CD4-positive, alpha-beta T cell (primary cell): ENCODE measurements at regions of chr12 and their contacts with region 1.

Region 1: DNA sequence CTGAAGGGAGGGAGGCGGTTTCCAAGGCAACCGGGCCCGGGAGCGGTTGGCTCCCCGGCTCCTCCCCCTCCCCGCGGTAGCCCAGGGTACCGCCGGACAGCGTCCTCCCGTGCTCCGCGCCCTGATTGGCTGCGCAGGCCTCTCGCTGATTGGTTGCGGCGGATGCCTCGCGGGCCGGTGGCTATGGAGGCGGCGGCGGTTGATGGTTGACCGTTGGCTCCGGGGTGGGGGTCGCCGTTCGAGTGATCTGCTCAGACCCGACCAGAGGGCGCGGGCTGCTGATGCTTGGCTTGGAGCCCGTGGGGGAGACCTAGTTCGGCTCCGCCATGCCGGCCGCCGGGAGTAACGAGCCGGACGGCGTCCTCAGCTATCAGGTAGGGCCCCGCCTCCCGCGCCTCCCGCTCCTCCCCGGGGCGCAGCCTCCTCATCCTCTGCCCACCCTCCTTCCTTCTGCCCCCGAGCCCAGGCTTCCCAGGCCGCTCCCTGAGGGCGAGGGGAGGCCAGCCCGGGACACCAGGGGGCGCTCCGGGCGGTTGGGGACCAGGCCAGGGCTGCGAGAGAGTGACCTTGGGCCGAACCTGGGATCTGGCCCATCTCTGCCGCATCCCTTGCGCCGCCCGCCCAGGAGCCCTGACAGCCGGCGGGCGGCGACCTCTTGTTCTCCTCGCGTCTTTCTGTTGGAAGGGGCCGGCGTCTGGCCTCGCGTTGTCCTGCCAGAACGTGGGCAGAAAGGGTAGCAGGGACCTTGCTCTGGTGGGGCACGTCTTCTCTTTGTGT is at the start of gene SLC4A8:
- DNase-seq: peak; percentile 37 to 89 (median 59)
- ATAC-seq: peak; percentile 81
- H3K4me3 ChIP-seq: peak within 1 kb of the TSS; percentile 74
- H3K4me3 Mint-ChIP-seq: peak within 1 kb of the TSS; percentile 84
- H3K27ac ChIP-seq: no peak within 1 kb of the TSS
- H3K27ac Mint-ChIP-seq: no peak within 1 kb of the TSS
- H3K4me1 ChIP-seq: peaks cover 18% of the 10 kb centered on the region
- H3K4me1 Mint-ChIP-seq: peaks cover 28% of the 10 kb centered on the region
- H3K27me3 ChIP-seq: no peaks in the 10 kb centered on the region
- H3K27me3 Mint-ChIP-seq: no peaks in the 10 kb centered on the region
- CTCF ChIP-seq: peak; percentile 75
- total RNA-seq, gene SLC4A8: 1.3 to 1.8 TPM

Region 2: GRCh38 chr12:51531978-51532497 is 107.2 kb after region 1 on chr12:
- CTCF ChIA-PET with region 1: interaction called, 18 read pairs
- POLR2A ChIA-PET with region 1: interaction called, 3 read pairs
- intact Hi-C with region 1: loop called (anchors 1 kb)
- DNase-seq: peak; percentile 56 to 83 (median 64)
- ATAC-seq: peak; percentile 94
- H3K4me3 ChIP-seq: no peak overlapping the region
- H3K4me3 Mint-ChIP-seq: no peak overlapping the region
- H3K27ac ChIP-seq: no peak overlapping the region
- H3K27ac Mint-ChIP-seq: no peak overlapping the region
- H3K4me1 ChIP-seq: peaks cover 6% of the 10 kb centered on the region
- H3K4me1 Mint-ChIP-seq: no peaks in the 10 kb centered on the region
- H3K27me3 ChIP-seq: no peaks in the 10 kb centered on the region
- H3K27me3 Mint-ChIP-seq: peaks cover 7% of the 10 kb centered on the region
- CTCF ChIP-seq: peak; percentile 85

Region 3: DNA sequence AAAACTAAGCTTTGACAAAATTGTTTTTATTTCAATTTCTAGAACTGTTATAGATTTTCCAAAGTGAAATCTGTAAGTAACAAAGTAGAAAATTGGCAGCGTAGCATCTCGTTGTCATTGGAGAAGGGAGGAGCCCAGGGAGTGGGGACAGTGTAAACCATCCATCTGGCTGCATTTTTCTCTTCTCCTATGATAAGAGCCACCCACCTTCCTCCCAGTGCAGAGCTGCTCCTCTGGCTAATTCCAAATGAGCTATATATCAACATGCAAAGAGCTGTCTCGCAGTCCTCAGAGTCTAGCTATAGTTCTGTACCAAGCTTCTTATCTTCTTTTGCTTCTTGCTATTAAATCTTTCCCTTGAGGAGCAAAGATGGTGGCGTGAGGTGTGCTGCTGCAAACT is 222.8 kb after region 1 on chr12:
- CTCF ChIA-PET with region 1: no interaction called
- POLR2A ChIA-PET with region 1: no interaction called
- intact Hi-C with region 1: no loop called
- DNase-seq: no peak
- ATAC-seq: no peak
- H3K4me3 ChIP-seq: no peak overlapping the region
- H3K4me3 Mint-ChIP-seq: no peak overlapping the region
- H3K27ac ChIP-seq: no peak overlapping the region
- H3K27ac Mint-ChIP-seq: no peak overlapping the region
- H3K4me1 ChIP-seq: no peaks in the 10 kb centered on the region
- H3K4me1 Mint-ChIP-seq: no peaks in the 10 kb centered on the region
- H3K27me3 ChIP-seq: peaks cover 0 to 5% of the 10 kb centered on the region in 2 experiments
- H3K27me3 Mint-ChIP-seq: peaks cover 7% of the 10 kb centered on the region
- CTCF ChIP-seq: no peak

Region 4: GRCh38 chr12:51814311-51815088 is 389.6 kb after region 1 on chr12:
- CTCF ChIA-PET with region 1: no interaction called
- POLR2A ChIA-PET with region 1: no interaction called
- intact Hi-C with region 1: loop called in 1 of 2 experiments (anchors 2 kb)
- DNase-seq: peak; percentile 36 to 87 (median 63)
- ATAC-seq: peak; percentile 89
- H3K4me3 ChIP-seq: peak overlapping the region; percentile 52
- H3K4me3 Mint-ChIP-seq: peak overlapping the region; percentile 87
- H3K27ac ChIP-seq: no peak overlapping the region
- H3K27ac Mint-ChIP-seq: peak overlapping the region; percentile 45
- H3K4me1 ChIP-seq: peaks cover 17% of the 10 kb centered on the region
- H3K4me1 Mint-ChIP-seq: peaks cover 10% of the 10 kb centered on the region
- H3K27me3 ChIP-seq: peaks cover 0 to 4% of the 10 kb centered on the region in 2 experiments
- H3K27me3 Mint-ChIP-seq: no peaks in the 10 kb centered on the region
- CTCF ChIP-seq: peak; percentile 38

Region 5: GRCh38 chr12:51871126-51871525 is 446.3 kb after region 1 on chr12:
- CTCF ChIA-PET with region 1: no interaction called
- POLR2A ChIA-PET with region 1: no interaction called
- intact Hi-C with region 1: loop called (anchors 1 to 5 kb)
- DNase-seq: peak in 2 of 14 experiments; percentile 36 to 51
- ATAC-seq: no peak
- H3K4me3 ChIP-seq: no peak overlapping the region
- H3K4me3 Mint-ChIP-seq: no peak overlapping the region
- H3K27ac ChIP-seq: no peak overlapping the region
- H3K27ac Mint-ChIP-seq: no peak overlapping the region
- H3K4me1 ChIP-seq: peaks cover 11% of the 10 kb centered on the region
- H3K4me1 Mint-ChIP-seq: peaks cover 13% of the 10 kb centered on the region
- H3K27me3 ChIP-seq: peaks cover 31 to 39% of the 10 kb centered on the region in 2 experiments
- H3K27me3 Mint-ChIP-seq: peaks cover 48% of the 10 kb centered on the region
- CTCF ChIP-seq: no peak